Tibial artery (tissue), 4 donors: ENCODE measurements at regions of chr9 and their contacts with region 1.

Region 1: DNA sequence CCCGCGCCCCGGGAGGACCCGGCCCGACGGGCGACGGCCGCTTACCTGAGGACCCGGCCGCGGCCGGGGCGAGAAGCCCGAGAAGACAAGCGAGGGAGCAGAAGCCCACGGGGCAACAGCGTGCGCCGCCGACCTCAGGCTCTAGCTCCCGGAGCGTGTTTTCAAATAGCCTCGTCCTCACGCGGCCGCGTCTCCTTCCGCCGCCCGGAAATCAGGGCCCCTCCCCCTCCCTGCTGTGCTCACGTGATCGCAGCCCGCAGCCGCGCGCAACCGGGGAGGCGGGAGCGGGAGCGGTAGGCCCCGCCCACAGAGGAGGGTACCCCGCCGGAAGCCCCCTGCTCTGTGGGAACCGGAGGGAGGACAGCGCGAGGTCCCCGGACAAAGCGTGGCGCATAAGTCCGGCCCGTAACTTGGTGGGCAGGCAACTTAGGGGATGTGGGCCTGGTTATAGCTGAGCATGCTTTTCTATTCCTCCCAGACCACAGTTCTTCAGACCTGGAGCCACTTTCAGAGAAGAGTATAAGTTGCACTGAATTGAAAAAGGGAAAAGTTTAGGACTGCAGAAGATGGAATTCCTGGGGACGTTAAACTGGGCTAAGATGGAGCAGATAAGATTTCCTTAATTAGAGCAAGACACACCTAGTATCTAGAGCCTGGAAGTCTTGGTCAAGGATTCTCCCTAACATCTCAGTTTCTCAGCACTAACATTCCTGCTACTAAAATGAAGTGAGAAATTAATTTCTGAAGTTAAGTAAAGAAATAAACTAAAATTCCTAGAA is at the start of gene TEX10:
- DNase-seq: peak; percentile 86 to 92
- H3K4me3 ChIP-seq: peak within 1 kb of the TSS; percentile 95 to 100
- H3K27ac ChIP-seq: peak within 1 kb of the TSS; percentile 86 to 94
- H3K4me1 ChIP-seq: peaks cover 0 to 24% (median 9%) of the 10 kb centered on the region in 4 donors
- H3K27me3 ChIP-seq: no peaks in the 10 kb centered on the region
- CTCF ChIP-seq: no peak

Region 2: DNA sequence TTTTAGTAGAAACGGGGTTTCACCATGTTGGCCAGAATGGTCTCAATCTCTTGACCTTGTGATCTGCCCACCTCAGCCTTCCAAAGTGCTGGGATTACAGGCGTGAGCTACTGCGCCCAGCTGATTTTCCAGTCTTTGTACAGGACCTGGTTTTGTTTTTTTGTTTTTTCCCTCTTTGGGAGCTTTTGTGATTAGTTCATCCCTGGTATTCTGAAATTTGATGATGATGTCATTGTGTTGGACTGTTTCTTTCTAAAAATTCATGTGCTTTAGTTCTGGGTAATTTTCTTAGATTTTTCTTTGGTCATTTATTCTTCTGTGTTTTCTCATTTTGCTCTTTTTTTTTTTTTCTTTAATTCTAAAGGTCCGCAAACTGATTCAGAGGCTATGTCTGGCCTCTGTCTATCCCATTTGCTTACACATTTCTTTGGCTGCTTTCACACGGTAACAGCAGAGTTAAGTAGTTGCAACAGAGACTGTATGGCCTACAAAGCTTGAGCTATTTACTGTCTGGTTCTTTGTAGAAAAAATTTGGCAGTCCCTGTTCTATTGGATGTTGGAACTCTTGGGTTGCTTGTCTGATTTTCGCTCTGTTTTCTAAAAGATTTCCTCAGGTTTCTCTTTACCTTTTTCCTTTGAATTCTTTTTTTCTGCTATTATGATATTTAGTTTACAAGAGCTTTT is 421.6 kb before region 1 on chr9:
- intact Hi-C with region 1: no loop called
- DNase-seq: no peak
- H3K4me3 ChIP-seq: no peak overlapping the region
- H3K27ac ChIP-seq: no peak overlapping the region
- H3K4me1 ChIP-seq: peaks cover 0 to 5% (median 0%) of the 10 kb centered on the region in 4 donors
- H3K27me3 ChIP-seq: no peaks in the 10 kb centered on the region
- CTCF ChIP-seq: no peak

Region 3: DNA sequence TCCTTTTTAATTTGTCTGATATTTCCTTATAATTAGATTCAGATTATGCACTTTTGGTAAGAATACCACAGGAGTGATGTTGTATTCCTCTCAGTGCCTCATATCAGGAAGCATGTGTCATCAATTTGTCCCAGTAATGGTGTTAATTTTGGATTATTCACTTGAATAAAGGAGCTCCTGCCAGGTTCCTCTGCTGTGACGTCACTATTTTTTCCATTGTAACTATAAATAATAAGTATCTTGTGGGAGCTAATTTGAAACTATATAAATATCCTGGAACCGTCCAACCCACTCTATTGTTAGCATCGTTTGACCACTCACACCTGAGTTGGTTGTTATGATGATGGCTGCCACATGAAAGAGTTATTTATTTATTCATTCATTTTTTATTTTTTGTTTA is 146.0 kb before region 1 on chr9:
- intact Hi-C with region 1: no loop called
- DNase-seq: no peak
- H3K4me3 ChIP-seq: no peak overlapping the region
- H3K27ac ChIP-seq: no peak overlapping the region
- H3K4me1 ChIP-seq: no peaks in the 10 kb centered on the region
- H3K27me3 ChIP-seq: no peaks in the 10 kb centered on the region
- CTCF ChIP-seq: no peak

Region 4: DNA sequence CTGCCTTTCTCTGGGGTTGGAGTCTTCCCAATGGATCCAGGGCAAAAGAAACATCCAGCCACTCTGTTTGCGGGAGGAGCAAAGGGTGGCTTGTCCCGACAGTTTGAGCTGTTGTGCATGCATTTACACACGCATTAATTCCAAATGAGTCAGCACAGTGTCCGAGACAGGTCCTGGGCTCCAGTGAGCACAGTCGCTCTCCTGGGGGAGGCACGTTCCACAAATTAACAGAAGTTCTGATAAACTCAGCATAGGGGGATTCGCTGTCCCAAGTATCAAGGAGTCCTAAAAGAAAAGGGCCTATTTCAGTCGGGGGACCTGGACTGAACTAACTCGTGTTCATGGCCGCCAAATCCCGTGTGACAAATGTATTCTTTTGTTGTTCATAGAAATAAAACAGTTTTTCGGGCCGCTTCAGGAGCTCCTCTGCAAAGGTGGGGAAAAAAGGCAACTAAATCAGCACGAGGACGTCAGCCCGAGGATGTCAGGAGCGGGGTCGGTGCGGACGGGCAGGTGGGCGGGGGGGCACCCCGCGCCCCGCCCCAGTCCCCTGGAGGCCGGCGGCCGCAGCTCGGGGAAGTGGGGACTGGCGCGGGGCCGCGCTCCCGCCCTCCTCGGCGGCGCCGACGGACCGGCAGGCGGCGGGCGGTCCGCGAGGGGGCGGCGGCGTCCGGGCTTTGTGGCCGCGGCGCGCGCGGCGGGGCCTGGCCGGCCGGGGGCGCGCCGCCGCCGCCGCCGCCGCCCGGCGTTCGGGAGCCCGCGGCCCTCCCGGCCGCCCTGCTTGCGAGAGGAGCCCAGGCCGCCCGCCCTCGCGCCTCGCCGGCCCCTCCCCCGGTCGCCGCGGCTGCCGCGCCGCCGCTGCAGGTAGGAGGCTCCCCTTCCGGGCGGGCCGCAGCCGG is 73.9 kb after region 1 on chr9 and contains the start of gene MSANTD3:
- intact Hi-C with region 1: loop called (anchors 5 kb)
- DNase-seq: peak; percentile 35 to 81
- H3K4me3 ChIP-seq: peak within 1 kb of the TSS; percentile 65
- H3K27ac ChIP-seq: peak within 1 kb of the TSS; percentile 84 to 88
- H3K4me1 ChIP-seq: peaks cover 0 to 38% (median 19%) of the 10 kb centered on the region in 4 donors
- H3K27me3 ChIP-seq: peaks cover 0 to 3% of the 10 kb centered on the region in 2 donors
- CTCF ChIP-seq: peak; percentile 20 to 49

Region 5: DNA sequence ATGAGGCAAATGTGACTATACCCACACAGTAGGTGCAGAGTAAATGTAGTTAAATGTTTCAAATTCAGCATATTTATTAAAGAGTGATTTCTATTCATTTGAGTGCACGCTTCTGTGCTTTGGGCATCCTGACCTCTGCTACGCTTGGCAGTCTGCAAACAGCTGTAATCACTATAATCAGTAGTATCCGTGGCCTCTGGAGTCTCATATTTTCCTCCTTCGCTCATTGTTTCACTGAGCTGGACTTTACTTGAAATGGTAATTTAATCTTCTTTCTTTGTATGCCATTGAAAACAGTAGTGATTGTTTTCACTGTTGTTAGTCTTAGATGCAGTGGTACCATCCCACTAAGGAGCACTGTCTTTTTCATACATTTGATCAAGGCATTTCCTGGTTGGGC is 181.5 kb after region 1 on chr9:
- intact Hi-C with region 1: no loop called
- DNase-seq: no peak
- H3K4me3 ChIP-seq: no peak overlapping the region
- H3K27ac ChIP-seq: no peak overlapping the region
- H3K4me1 ChIP-seq: no peaks in the 10 kb centered on the region
- H3K27me3 ChIP-seq: no peaks in the 10 kb centered on the region
- CTCF ChIP-seq: no peak

Region 6: DNA sequence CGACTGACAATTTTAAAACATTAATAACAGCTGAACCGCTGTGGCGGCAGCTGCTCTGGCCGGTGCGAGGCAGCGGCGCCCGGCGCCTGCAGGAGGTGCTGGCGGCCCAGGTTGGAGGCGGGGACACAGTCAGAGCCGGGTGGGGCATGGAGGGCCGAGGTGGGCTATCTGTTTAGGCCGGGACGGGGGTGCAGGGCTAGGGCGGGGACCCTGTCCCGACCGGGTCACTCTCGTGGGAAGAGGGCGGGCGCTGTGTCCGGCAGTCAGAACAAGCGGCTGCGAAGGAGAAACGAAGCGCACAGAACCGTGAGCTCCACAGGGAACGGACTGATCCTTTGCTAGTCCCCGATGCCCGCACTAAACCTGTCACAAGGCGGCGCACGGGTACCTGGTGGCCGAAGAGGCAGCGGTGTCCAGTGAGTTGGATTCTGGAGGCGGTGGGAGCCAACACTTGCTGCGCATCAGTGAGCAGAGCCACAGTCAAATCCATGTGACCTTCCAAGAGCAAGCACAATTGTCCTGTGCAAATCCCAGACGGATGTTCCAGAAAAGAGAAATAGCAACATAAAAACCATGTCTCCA is 1096.3 kb after region 1 on chr9:
- intact Hi-C with region 1: no loop called
- DNase-seq: peak; percentile 34 to 77
- H3K4me3 ChIP-seq: peak overlapping the region; percentile 49 to 59
- H3K27ac ChIP-seq: no peak overlapping the region
- H3K4me1 ChIP-seq: peaks cover 0 to 10% (median 0%) of the 10 kb centered on the region in 4 donors
- H3K27me3 ChIP-seq: peaks cover 0 to 4% of the 10 kb centered on the region in 2 donors
- CTCF ChIP-seq: peak; percentile 40 to 49